PC-9 (cell line): ENCODE measurements at regions of chr14 and their contacts with region 1.

Region 1: DNA sequence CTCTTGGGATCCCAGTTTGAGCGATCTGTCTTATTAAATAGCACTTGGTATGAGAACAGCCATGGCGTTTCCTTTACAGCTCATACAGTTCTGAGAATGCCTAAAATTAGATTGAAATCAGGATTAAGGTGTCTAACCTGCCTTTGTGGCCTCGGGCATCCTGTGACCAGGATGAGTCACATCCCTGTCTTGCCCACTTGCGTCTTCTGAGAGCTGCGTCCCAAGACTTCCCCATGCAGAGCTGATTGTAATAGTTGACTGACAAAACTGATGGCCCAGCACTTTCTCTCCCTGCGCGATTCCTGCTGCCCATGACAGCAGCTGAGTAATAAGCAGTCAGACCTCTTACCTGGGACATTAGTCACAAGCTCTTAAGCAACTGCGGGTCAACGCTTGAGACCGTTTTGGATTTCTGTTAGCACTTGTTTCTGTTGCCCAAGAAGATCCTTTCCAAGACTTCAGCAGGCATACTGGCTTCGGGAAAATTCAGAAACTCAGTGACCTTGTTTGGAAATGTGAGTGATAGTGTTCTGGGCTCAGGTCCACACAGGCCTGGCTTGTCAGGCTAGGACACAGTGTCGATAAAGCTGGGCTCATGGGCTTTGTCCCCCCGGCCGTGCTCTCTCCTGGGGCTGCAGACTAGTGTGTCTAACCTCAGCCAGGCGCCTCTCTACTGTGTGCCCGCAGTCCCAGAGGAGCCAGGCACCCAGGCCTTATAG is 169.9 kb upstream of the HIF1A start:
- DNase-seq: peak; percentile 94 to 100
- H3K4me3 ChIP-seq: peak overlapping the region; percentile 32; the same call in 1 of the 2 replicates
- H3K27ac ChIP-seq: peak overlapping the region; percentile 98
- H3K4me1 ChIP-seq: peaks cover 69% of the 10 kb centered on the region
- H3K27me3 ChIP-seq: no peaks in the 10 kb centered on the region
- CTCF ChIP-seq: no peak

Region 2: GRCh38 chr14:61368114-61368726 is 157.2 kb before region 1 on chr14:
- CTCF ChIA-PET with region 1: no interaction called
- POLR2A ChIA-PET with region 1: no interaction called
- intact Hi-C with region 1: loop called (anchors 10 kb)
- DNase-seq: peak; percentile 74 to 96
- H3K4me3 ChIP-seq: peak overlapping the region; percentile 51
- H3K27ac ChIP-seq: peak overlapping the region; percentile 97
- H3K4me1 ChIP-seq: peaks cover 64% of the 10 kb centered on the region
- H3K27me3 ChIP-seq: no peaks in the 10 kb centered on the region
- CTCF ChIP-seq: no peak

Region 3: GRCh38 chr14:61512026-61512834 is 13.2 kb before region 1 on chr14:
- CTCF ChIA-PET with region 1: no interaction called
- POLR2A ChIA-PET with region 1: no interaction called
- intact Hi-C with region 1: loop called (anchors 1 kb)
- DNase-seq: peak in 1 of 2 experiments; percentile 24
- H3K4me3 ChIP-seq: no peak overlapping the region
- H3K27ac ChIP-seq: peak overlapping the region; percentile 30
- H3K4me1 ChIP-seq: peaks cover 54% of the 10 kb centered on the region
- H3K27me3 ChIP-seq: no peaks in the 10 kb centered on the region
- CTCF ChIP-seq: no peak

Region 4: GRCh38 chr14:61537563-61538463 is 12.4 kb after region 1 on chr14:
- CTCF ChIA-PET with region 1: interaction called, 3 read pairs
- POLR2A ChIA-PET with region 1: interaction called, 4 read pairs
- intact Hi-C with region 1: loop called (anchors 1 kb)
- DNase-seq: peak; percentile 81 to 100
- H3K4me3 ChIP-seq: peak overlapping the region; percentile 35; the same call in 1 of the 2 replicates
- H3K27ac ChIP-seq: peak overlapping the region; percentile 98
- H3K4me1 ChIP-seq: peaks cover 62% of the 10 kb centered on the region
- H3K27me3 ChIP-seq: no peaks in the 10 kb centered on the region
- CTCF ChIP-seq: no peak

Region 5: GRCh38 chr14:61616524-61617185 is 91.2 kb after region 1 on chr14:
- CTCF ChIA-PET with region 1: no interaction called
- POLR2A ChIA-PET with region 1: no interaction called
- intact Hi-C with region 1: loop called (anchors 1 kb)
- DNase-seq: peak in 1 of 2 experiments; percentile 83
- H3K4me3 ChIP-seq: no peak overlapping the region
- H3K27ac ChIP-seq: peak overlapping the region; percentile 74
- H3K4me1 ChIP-seq: peaks cover 37% of the 10 kb centered on the region
- H3K27me3 ChIP-seq: no peaks in the 10 kb centered on the region
- CTCF ChIP-seq: no peak

Region 6: DNA sequence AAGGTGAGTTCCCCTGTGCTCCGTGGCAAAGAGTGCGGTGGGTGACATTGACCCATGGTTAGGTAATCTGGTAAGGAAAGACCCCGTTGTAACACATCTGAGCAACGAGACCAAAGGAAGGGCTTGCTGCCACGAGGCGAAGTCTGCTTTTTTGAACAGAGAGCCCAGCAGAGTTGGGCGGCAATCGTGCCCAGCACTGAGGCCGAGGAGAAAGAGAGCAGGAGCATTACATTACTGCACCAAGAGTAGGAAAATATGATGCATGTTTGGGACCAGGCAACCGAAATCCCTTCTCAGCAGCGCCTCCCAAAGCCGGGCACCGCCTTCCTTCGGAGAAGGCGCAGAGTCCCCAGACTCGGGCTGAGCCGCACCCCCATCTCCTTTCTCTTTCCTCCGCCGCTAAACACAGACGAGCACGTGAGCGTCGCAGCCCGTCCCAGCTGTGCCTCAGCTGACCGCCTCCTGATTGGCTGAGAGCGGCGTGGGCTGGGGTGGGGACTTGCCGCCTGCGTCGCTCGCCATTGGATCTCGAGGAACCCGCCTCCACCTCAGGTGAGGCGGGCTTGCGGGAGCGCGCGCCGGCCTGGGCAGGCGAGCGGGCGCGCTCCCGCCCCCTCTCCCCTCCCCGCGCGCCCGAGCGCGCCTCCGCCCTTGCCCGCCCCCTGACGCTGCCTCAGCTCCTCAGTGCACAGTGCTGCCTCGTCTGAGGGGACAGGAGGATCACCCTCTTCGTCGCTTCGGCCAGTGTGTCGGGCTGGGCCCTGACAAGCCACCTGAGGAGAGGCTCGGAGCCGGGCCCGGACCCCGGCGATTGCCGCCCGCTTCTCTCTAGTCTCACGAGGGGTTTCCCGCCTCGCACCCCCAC is 169.6 kb after region 1 on chr14 and contains the start of gene HIF1A:
- CTCF ChIA-PET with region 1: no interaction called
- POLR2A ChIA-PET with region 1: interaction called, 6 read pairs
- intact Hi-C with region 1: loop called (anchors 1 kb)
- DNase-seq: peak; percentile 98
- H3K4me3 ChIP-seq: peak within 1 kb of the TSS; percentile 85
- H3K27ac ChIP-seq: peak within 1 kb of the TSS; percentile 93
- H3K4me1 ChIP-seq: peaks cover 28% of the 10 kb centered on the region
- H3K27me3 ChIP-seq: no peaks in the 10 kb centered on the region
- CTCF ChIP-seq: no peak
- total RNA-seq, gene HIF1A: 146 and 154 TPM in 2 replicates